Activated naive CD4-positive, alpha-beta T cell treated with anti-CD3 and anti-CD28 coated beads for 36 hours (primary cell): ENCODE measurements at regions of chr11 and their contacts with region 1.

Region 1: GRCh38 chr11:108199446-108200321 is 22.8 kb downstream of the NPAT start:
- DNase-seq: peak; percentile 94
- H3K4me3 Mint-ChIP-seq: no peak overlapping the region
- H3K27ac Mint-ChIP-seq: peak overlapping the region; percentile 48
- H3K4me1 Mint-ChIP-seq: peaks cover 86% of the 10 kb centered on the region
- H3K27me3 Mint-ChIP-seq: no peaks in the 10 kb centered on the region

Region 2: DNA sequence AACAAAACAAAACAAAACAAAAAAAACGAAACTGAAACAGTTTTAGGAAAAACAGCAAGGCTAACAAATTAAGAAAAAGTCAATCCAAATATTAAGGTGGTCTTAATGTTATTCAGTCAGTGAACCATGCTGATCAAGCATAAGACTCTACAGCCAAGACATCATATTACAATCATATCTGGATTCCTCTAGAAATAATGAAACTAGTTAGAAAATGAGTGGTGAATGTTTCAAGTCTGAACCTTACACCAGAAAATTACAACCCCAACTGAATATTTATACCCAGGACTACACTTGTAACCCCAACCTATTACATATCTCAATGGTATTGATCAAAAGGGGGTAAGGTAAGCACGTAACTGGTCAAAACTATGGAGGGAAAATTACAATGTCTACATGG is 29.5 kb before region 1 on chr11:
- CTCF ChIA-PET with region 1: interaction called, 4 read pairs
- intact Hi-C with region 1: loop called (anchors 1 kb)
- DNase-seq: no peak
- H3K4me3 Mint-ChIP-seq: no peak overlapping the region
- H3K27ac Mint-ChIP-seq: no peak overlapping the region
- H3K4me1 Mint-ChIP-seq: peaks cover 39% of the 10 kb centered on the region
- H3K27me3 Mint-ChIP-seq: no peaks in the 10 kb centered on the region